Colonic mucosa (tissue), 4 donors: ENCODE measurements at regions of chr10 and their contacts with region 1.

Region 1: GRCh38 chr10:103966671-103967447 is at the start of gene SLK:
- DNase-seq: peak; percentile 86
- H3K4me3 ChIP-seq: peak within 1 kb of the TSS; percentile 77
- H3K27ac ChIP-seq: peak within 1 kb of the TSS; percentile 90
- H3K4me1 ChIP-seq: peaks cover 3% of the 10 kb centered on the region
- H3K27me3 ChIP-seq: no peaks in the 10 kb centered on the region
- CTCF ChIP-seq: no peak
- total RNA-seq, gene SLK: 35.5 to 51.6 TPM

Region 2: GRCh38 chr10:103789771-103790201 is 177.1 kb before region 1 on chr10:
- intact Hi-C with region 1: no loop called
- DNase-seq: peak; percentile 83
- H3K4me3 ChIP-seq: no peak overlapping the region
- H3K27ac ChIP-seq: peak overlapping the region; percentile 80
- H3K4me1 ChIP-seq: peaks cover 8% of the 10 kb centered on the region
- H3K27me3 ChIP-seq: no peaks in the 10 kb centered on the region
- CTCF ChIP-seq: no peak

Region 3: DNA sequence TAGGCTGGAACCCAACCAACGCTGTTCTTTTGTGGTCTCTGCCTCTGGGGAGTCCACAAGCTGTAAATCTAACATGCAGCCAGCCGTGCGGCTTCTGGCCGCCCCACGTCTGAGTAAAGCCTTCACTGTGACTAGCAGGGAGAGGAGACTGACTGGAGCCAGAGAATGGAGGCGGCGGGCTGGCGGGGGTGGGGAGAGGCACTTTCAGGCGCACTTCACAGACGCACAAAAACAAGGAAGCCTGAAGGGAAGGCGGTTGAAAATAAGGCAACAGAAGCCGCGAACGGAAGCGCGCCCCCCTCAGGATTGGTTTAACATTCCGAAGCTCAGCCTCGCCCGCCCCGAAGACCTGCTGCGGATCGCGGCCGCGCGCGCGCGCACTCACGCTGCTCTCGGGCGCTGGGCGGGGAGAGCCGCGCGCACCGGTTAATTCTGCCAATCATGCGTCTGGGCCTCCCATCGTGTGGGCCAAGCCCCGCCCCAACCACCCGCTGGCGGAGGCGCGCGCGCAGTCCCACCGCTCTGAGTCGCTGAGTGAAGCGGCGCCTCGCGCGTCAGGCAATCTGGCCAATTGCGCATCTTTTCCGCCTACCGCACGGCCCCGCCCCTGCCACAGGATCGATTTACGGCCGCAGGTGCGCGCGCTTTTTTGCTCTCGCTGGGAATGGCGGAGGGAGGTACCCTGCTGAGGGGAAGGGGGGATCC is 154.8 kb after region 1 on chr10 and contains the start of gene SFR1:
- intact Hi-C with region 1: loop called (anchors 5 kb)
- DNase-seq: peak; percentile 99
- H3K4me3 ChIP-seq: peak within 1 kb of the TSS; percentile 66
- H3K27ac ChIP-seq: peak within 1 kb of the TSS; percentile 100
- H3K4me1 ChIP-seq: no peaks in the 10 kb centered on the region
- H3K27me3 ChIP-seq: no peaks in the 10 kb centered on the region
- CTCF ChIP-seq: peak; percentile 39
- total RNA-seq, gene SFR1: 6.8 to 8.0 TPM